Right ventricle myocardium inferior (tissue), 1 donor: ENCODE measurements at regions of chr10 and their contacts with region 1.

Region 1: GRCh38 chr10:117174439-117175214 is 22.7 kb upstream of the KCNK18 start:
- DNase-seq: peak; percentile 87
- ATAC-seq: peak; percentile 81

Region 2: DNA sequence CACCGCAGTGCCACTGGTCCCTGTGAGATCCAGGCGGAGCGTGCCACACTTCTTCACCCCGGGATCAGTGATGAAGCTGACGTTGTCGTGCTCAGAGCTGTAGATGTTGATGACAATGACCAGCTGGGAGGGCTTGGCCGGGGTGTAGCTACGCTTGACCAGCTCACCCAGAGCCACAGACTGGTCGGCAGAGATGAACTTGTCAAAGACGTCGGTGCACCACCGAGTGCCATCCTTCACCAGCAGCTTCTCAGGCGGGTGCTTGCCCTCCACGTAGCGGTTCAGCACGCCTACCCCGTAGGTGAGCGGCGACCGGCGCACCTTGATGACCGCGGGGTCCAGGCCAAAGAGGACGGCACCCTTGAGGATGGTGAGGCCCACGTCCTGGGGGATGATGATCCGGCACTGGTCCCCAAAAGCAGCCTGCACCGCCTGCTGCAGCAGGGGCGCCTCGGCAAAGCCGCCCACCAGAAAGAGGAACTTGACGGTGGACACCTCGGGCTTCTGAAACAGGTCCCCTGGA is 499.7 kb before region 1 on chr10:
- intact Hi-C with region 1: loop called (anchors 5 kb)
- DNase-seq: peak; percentile 34
- ATAC-seq: no peak

Region 3: DNA sequence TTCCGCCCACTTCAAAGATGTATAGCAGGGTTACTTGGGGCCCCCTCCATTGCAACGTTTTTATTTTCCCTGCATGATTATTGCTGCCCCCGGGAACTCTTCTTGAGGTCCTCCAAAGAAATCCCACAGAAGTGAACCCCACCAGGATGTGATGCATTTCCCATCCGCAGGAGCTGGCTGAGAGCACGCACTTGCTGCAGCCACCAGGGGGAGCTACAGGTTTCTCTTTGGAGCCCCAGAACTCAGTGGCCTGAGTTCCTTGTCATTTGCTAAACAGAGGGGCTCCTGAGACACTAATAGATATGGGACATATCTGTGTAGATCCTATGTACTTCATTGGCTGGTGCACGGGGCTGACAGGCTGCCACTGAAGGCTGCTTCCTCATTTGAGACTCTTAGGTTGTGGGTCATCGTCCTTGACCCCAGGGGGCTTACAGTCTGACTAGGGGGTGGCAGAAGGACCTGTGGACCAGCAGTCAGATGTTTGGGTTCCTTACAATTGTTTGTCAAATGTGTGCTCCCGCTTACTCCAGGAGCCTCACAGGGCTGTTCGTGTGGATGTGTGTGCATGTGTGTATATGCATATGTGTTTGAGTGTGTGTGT is 377.6 kb before region 1 on chr10:
- intact Hi-C with region 1: loop called (anchors 2 kb)
- DNase-seq: no peak
- ATAC-seq: peak; percentile 81